ENCODE measurements at regions of chr15 and their contacts with region 1.

Region 1: GRCh38 chr15:94815110-94815731 is 583.9 kb downstream of the MCTP2 start:
- DNase-seq: no peak
- H3K4me3 ChIP-seq: no peak overlapping the region
- H3K27ac ChIP-seq: no peak overlapping the region
- H3K4me1 ChIP-seq: no peaks in the 10 kb centered on the region
- H3K27me3 ChIP-seq: no peaks in the 10 kb centered on the region
- CTCF ChIP-seq: no peak
- POLR2A ChIP-seq: no peak

Region 2: GRCh38 chr15:94951538-94951937 is 136.3 kb after region 1 on chr15:
- intact Hi-C with region 1: no loop called
- DNase-seq: no peak
- H3K4me3 ChIP-seq: no peak overlapping the region
- H3K27ac ChIP-seq: no peak overlapping the region
- H3K4me1 ChIP-seq: no peaks in the 10 kb centered on the region
- H3K27me3 ChIP-seq: no peaks in the 10 kb centered on the region
- CTCF ChIP-seq: no peak
- POLR2A ChIP-seq: no peak

Region 3: DNA sequence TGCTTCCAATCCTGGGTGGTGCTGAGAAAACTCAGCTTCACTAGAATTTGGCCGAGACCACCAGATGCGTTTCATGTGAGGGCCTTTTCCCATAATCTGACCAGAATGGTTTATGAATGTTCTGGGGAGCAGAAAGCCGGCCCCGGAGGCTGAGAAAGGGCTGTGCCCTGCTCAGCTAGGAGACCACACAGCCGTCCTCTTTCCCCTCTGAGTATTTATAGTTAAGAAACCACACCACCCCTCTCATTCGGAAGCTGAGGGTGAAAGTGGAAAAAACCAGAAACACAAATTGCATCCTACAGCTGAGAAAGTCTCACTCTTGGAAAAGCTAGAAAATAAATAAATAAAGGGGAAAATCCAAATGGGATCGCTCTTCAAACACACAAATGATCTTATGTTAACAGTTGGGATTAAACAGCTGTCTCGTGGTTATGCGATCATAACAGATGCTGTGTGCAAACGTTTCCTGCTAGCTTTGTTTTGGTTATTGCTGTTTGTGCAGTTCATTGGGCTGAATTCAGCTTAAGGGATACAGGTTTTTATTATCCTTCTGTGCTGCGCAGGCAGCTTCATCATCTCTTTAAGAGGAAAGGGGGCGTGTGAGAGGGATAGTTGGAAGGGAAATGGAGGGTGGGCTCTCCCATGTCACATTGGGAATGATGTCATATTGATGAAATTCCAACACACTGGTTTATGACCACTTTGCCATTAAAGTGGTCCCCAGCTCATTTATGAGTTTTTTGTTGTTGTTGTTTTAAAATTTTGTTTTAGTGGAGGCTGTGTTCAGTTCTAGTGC is 489.1 kb after region 1 on chr15:
- intact Hi-C with region 1: loop called (anchors 10 kb)
- DNase-seq: no peak
- H3K4me3 ChIP-seq: no peak overlapping the region
- H3K27ac ChIP-seq: peak overlapping the region; percentile 26 to 86 (median 68)
- H3K4me1 ChIP-seq: peaks cover 0 to 10% of the 10 kb centered on the region in 2 donors
- H3K27me3 ChIP-seq: no peaks in the 10 kb centered on the region
- CTCF ChIP-seq: no peak
- POLR2A ChIP-seq: peak in 1 of 2 donors; percentile 25

Measured in thyroid gland (tissue), 4 donors.